ENCODE measurements at regions of chr5 and their contacts with region 1.

Region 1: DNA sequence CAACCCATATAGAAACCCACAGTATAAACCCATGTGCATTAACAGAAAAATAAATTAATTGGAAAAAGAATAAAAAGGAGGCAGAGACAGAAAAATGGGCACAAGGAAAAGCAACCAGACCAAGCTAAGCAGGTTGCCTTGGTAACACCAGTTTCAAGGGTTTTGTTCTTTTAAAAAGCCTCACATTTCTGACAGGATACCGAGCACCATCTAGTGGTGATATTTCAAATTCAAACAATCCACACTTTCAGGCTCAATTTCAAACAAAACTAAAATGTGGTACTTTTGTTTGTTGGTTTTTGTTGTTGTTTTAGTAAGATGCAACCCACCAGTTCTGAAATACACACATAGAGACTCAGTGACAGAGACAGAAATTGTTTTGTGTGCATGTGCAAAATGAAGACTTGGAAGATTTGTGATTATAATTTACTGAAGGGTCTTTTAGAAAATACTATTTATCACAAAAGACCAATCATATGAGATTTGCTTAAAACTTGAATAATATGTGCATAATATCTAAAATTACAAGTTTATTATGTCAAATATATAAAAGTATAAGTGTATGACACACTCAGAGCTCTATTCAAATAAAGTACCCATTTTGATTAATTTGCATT is 318.2 kb downstream of the SLCO4C1 start:
- DNase-seq: peak in 1 of 2 donors; percentile 31
- ATAC-seq: peak in 1 of 3 donors; percentile 36
- H3K4me3 ChIP-seq: no peak overlapping the region
- H3K4me3 Mint-ChIP-seq: no peak overlapping the region
- H3K27ac ChIP-seq: no peak overlapping the region
- H3K27ac Mint-ChIP-seq: no peak overlapping the region
- H3K4me1 ChIP-seq: no peaks in the 10 kb centered on the region
- H3K4me1 Mint-ChIP-seq: no peaks in the 10 kb centered on the region
- H3K27me3 ChIP-seq: no peaks in the 10 kb centered on the region
- H3K27me3 Mint-ChIP-seq: no peaks in the 10 kb centered on the region
- CTCF ChIP-seq: no peak

Region 2: GRCh38 chr5:100430268-100431195 is 1547.3 kb before region 1 on chr5:
- intact Hi-C with region 1: loop called (anchors 5 kb)
- DNase-seq: peak; percentile 15 to 63
- ATAC-seq: peak in 2 of 3 donors; percentile 43 to 62
- H3K4me3 ChIP-seq: no peak overlapping the region
- H3K4me3 Mint-ChIP-seq: no peak overlapping the region
- H3K27ac ChIP-seq: no peak overlapping the region
- H3K27ac Mint-ChIP-seq: no peak overlapping the region
- H3K4me1 ChIP-seq: no peaks in the 10 kb centered on the region
- H3K4me1 Mint-ChIP-seq: no peaks in the 10 kb centered on the region
- H3K27me3 ChIP-seq: no peaks in the 10 kb centered on the region
- H3K27me3 Mint-ChIP-seq: no peaks in the 10 kb centered on the region
- CTCF ChIP-seq: peak; percentile 67

Region 3: GRCh38 chr5:101783241-101784013 is 194.4 kb before region 1 on chr5:
- intact Hi-C with region 1: no loop called
- DNase-seq: no peak
- ATAC-seq: no peak
- H3K4me3 ChIP-seq: no peak overlapping the region
- H3K4me3 Mint-ChIP-seq: no peak overlapping the region
- H3K27ac ChIP-seq: no peak overlapping the region
- H3K27ac Mint-ChIP-seq: no peak overlapping the region
- H3K4me1 ChIP-seq: no peaks in the 10 kb centered on the region
- H3K4me1 Mint-ChIP-seq: no peaks in the 10 kb centered on the region
- H3K27me3 ChIP-seq: no peaks in the 10 kb centered on the region
- H3K27me3 Mint-ChIP-seq: no peaks in the 10 kb centered on the region
- CTCF ChIP-seq: no peak

Region 4: DNA sequence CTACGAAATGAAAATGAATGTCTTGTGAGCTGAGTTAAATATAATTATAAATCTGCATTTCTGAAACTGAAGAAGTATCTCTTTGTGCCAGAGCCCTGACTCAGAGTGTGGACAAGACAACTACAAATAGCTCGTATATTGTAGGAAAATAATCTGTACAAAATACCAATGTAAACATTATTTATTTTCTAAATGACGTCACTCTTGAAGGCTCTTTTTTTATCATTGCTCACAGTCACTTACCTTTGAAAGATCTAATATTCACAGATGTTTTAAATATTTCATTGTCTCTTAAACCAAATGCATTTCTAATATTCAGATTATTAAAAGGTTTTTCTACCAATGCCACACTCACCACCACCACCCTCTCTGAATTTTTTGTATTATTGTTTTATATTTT is 92.1 kb after region 1 on chr5:
- intact Hi-C with region 1: no loop called
- DNase-seq: no peak
- ATAC-seq: no peak
- H3K4me3 ChIP-seq: no peak overlapping the region
- H3K4me3 Mint-ChIP-seq: no peak overlapping the region
- H3K27ac ChIP-seq: no peak overlapping the region
- H3K27ac Mint-ChIP-seq: no peak overlapping the region
- H3K4me1 ChIP-seq: no peaks in the 10 kb centered on the region
- H3K4me1 Mint-ChIP-seq: no peaks in the 10 kb centered on the region
- H3K27me3 ChIP-seq: no peaks in the 10 kb centered on the region
- H3K27me3 Mint-ChIP-seq: no peaks in the 10 kb centered on the region
- CTCF ChIP-seq: no peak

Region 5: GRCh38 chr5:102498271-102499034 is 520.6 kb after region 1 on chr5 and contains the start of gene SLCO6A1:
- intact Hi-C with region 1: no loop called
- DNase-seq: no peak
- ATAC-seq: no peak
- H3K4me3 ChIP-seq: no peak within 1 kb of the TSS
- H3K4me3 Mint-ChIP-seq: no peak within 1 kb of the TSS
- H3K27ac ChIP-seq: no peak within 1 kb of the TSS
- H3K27ac Mint-ChIP-seq: no peak within 1 kb of the TSS
- H3K4me1 ChIP-seq: no peaks in the 10 kb centered on the region
- H3K4me1 Mint-ChIP-seq: peaks cover 0 to 4% of the 10 kb centered on the region in 2 donors
- H3K27me3 ChIP-seq: no peaks in the 10 kb centered on the region
- H3K27me3 Mint-ChIP-seq: peaks cover 0 to 7% of the 10 kb centered on the region in 2 donors
- CTCF ChIP-seq: no peak
- total RNA-seq, gene SLCO6A1: not detected